PC-9 (cell line): ENCODE measurements at regions of chr7 and their contacts with region 1.

Region 1: GRCh38 chr7:106382929-106383328 is 98.1 kb upstream of the NAMPT start:
- DNase-seq: no peak
- H3K4me3 ChIP-seq: no peak overlapping the region
- H3K27ac ChIP-seq: no peak overlapping the region
- H3K4me1 ChIP-seq: peaks cover 15% of the 10 kb centered on the region
- H3K27me3 ChIP-seq: no peaks in the 10 kb centered on the region
- CTCF ChIP-seq: no peak

Region 2: DNA sequence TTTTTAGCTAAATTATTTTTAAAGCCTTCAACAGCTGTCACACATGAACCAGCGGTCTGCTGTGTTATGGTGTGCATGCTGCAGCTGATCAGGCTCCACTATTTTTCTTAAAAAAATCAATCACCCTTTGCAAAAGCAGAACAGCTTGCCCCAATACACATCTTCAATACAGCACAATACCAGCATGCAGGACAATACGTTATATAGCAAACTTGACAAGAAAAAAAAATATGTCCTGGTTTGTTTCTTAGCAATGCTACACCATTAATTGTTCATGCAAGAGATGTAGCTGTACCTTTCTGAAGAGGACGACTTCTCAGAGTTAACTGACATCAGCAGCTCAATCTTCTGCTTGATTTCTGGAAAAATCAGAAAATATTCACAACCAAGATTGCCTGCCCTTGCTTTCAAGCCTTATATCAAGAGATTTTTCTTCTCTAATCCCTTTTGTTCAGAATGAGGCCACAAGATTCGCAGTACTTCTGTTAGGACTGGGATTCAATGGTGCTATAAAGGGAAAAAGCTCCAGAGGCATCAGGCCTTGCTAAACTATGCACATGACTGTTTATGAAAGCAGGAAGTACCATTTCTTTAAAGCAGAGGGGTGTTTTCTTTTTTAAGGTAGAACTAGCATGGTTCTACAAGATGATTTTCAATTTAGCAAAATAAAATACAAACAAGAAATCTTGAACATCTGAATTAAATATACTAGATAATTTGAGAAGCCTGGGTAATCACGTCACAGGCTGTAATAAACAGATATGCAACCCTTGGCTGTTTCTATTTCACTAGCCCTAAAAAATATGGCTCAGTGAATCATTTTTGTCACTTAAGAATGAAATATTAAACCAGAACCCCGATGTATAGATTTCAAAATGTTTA is 1114.2 kb before region 1 on chr7:
- CTCF ChIA-PET with region 1: no interaction called
- POLR2A ChIA-PET with region 1: no interaction called
- intact Hi-C with region 1: no loop called
- DNase-seq: peak in 1 of 2 experiments; percentile 49
- H3K4me3 ChIP-seq: peak overlapping the region; percentile 59
- H3K27ac ChIP-seq: peak overlapping the region; percentile 76
- H3K4me1 ChIP-seq: peaks cover 35% of the 10 kb centered on the region
- H3K27me3 ChIP-seq: no peaks in the 10 kb centered on the region
- CTCF ChIP-seq: no peak

Region 3: DNA sequence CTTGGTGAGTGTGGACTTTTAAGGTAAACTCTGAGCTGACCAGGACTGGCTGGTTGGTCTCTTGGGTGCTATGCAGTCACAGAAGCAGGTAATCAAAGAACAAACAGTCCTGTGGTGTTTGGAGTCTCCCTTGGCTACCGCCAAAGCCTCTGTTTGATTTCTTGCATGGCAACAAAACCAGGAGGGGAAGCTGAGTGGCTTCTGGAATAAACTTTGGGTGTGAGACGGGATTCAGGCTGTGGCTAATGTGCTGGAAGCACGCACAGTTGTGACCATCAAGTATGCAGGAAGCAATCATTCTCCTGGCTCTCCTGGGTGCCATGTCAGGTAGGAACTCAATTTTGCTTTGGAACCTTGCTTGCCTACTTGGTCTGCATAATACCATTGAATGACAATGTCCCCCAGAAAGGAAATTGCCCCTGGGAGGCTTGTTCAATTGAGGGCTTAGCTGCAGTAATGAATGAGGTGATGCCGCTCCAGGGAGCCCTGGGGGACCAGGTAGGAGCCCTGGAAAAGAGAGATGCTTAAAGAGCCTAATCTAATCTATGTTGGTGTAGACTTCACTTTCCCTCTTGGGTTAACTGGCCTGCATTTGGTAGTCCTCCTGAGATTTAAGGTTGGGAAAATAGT is 419.8 kb before region 1 on chr7 and contains the start of gene CDHR3:
- CTCF ChIA-PET with region 1: interaction called, 12 read pairs
- POLR2A ChIA-PET with region 1: no interaction called
- intact Hi-C with region 1: no loop called
- DNase-seq: no peak
- H3K4me3 ChIP-seq: no peak within 1 kb of the TSS
- H3K27ac ChIP-seq: no peak within 1 kb of the TSS
- H3K4me1 ChIP-seq: no peaks in the 10 kb centered on the region
- H3K27me3 ChIP-seq: no peaks in the 10 kb centered on the region
- CTCF ChIP-seq: no peak
- total RNA-seq, gene CDHR3: 8.7 and 12.1 TPM in 2 replicates